Activated B cell treated with CpG ODN at 0.5 μM for 24 hours (primary cell): ENCODE measurements at regions of chr1 and their contacts with region 1.

Region 1: GRCh38 chr1:51878616-51879336 is at the start of gene NRDC:
- DNase-seq: peak; percentile 93
- ATAC-seq: peak; percentile 90
- H3K4me3 Mint-ChIP-seq: no peak within 1 kb of the TSS
- H3K27ac Mint-ChIP-seq: no peak within 1 kb of the TSS
- H3K4me1 Mint-ChIP-seq: peaks cover 29% of the 10 kb centered on the region
- H3K27me3 Mint-ChIP-seq: no peaks in the 10 kb centered on the region
- CTCF ChIP-seq: no peak
- total RNA-seq, gene NRDC: 157 and 162 TPM in 2 replicates

Region 2: GRCh38 chr1:50968158-50968820 is 910.5 kb before region 1 on chr1:
- CTCF ChIA-PET with region 1: no interaction called
- POLR2A ChIA-PET with region 1: interaction called, 3 read pairs
- intact Hi-C with region 1: loop called (anchors 2 kb)
- DNase-seq: peak; percentile 80
- ATAC-seq: peak; percentile 80
- H3K4me3 Mint-ChIP-seq: peak overlapping the region; percentile 98
- H3K27ac Mint-ChIP-seq: peak overlapping the region; percentile 87
- H3K4me1 Mint-ChIP-seq: peaks cover 18% of the 10 kb centered on the region
- H3K27me3 Mint-ChIP-seq: no peaks in the 10 kb centered on the region
- CTCF ChIP-seq: no peak

Region 3: DNA sequence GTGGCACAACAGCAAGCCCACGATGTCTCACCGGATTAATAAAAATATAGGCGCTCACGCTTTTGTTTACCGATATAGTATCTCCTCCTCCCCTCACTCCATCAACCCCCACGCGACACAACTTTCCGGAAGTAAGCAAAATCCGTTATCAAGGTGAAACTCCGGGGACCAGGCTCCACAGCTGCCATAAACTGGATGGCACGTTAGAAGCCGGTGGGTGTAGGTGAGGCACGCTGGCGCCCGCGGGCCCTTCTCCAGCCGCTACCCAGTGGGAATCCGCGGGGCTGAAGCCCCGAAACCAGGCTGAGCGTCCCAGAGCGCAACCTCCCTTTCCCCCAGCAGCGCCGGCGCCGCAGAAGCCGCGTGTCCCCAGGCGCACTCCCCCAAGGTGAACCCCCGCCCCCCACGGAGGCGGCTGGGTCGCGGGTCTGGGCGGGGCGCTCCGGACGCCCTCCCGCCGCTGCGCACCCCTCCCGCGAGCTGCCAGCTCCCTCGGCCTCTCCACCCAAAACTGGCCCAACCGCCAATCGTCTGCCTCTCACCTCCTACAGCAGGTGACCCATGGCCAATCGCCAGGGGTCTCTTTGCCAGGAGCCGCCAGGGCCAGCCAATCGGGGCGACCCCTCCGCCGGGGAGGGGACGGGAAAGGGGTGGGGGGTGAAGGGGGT is 149.5 kb before region 1 on chr1:
- CTCF ChIA-PET with region 1: no interaction called
- POLR2A ChIA-PET with region 1: interaction called, 3 read pairs
- intact Hi-C with region 1: loop called (anchors 2 kb)
- DNase-seq: peak; percentile 89
- ATAC-seq: peak; percentile 96
- H3K4me3 Mint-ChIP-seq: peak overlapping the region; percentile 95
- H3K27ac Mint-ChIP-seq: peak overlapping the region; percentile 87
- H3K4me1 Mint-ChIP-seq: peaks cover 48% of the 10 kb centered on the region
- H3K27me3 Mint-ChIP-seq: no peaks in the 10 kb centered on the region
- CTCF ChIP-seq: no peak

Region 4: GRCh38 chr1:51819810-51820209 is 59.0 kb before region 1 on chr1:
- CTCF ChIA-PET with region 1: no interaction called
- POLR2A ChIA-PET with region 1: no interaction called
- intact Hi-C with region 1: loop called (anchors 5 kb)
- DNase-seq: no peak
- ATAC-seq: no peak
- H3K4me3 Mint-ChIP-seq: no peak overlapping the region
- H3K27ac Mint-ChIP-seq: no peak overlapping the region
- H3K4me1 Mint-ChIP-seq: no peaks in the 10 kb centered on the region
- H3K27me3 Mint-ChIP-seq: no peaks in the 10 kb centered on the region
- CTCF ChIP-seq: no peak

Region 5: GRCh38 chr1:51897699-51898031 is 18.9 kb after region 1 on chr1:
- CTCF ChIA-PET with region 1: interaction called, 10 read pairs
- POLR2A ChIA-PET with region 1: interaction called, 3 read pairs
- intact Hi-C with region 1: no loop called
- DNase-seq: no peak
- ATAC-seq: no peak
- H3K4me3 Mint-ChIP-seq: no peak overlapping the region
- H3K27ac Mint-ChIP-seq: no peak overlapping the region
- H3K4me1 Mint-ChIP-seq: no peaks in the 10 kb centered on the region
- H3K27me3 Mint-ChIP-seq: peaks cover 57% of the 10 kb centered on the region
- CTCF ChIP-seq: no peak

Region 6: DNA sequence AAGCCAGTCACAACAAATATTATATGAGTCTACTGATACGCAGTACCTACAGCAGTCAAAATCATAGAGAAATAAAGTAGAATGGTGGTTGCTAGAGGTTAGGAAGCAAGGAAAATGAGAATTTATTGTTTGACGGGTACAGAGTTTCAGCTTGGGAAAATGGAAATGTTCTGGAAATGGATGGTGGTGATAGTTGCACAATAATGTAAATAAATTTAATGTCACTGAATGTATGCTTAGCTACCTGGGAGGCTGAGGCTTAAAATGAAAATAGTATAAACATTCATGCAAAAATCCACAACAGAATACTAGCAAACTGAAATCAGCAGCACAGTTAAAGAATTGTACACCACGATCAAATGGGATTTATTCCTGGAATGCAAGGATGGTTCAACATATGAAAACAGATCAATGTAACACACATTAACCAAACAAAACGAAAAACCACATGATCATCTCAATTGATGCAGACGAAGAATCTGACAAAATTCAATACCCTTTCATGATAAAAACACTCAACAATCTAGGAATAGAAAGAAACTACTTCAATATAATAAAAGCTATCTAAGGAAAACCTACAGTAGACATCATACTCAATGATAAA is 663.4 kb after region 1 on chr1:
- CTCF ChIA-PET with region 1: no interaction called
- POLR2A ChIA-PET with region 1: no interaction called
- intact Hi-C with region 1: no loop called
- DNase-seq: no peak
- ATAC-seq: no peak
- H3K4me3 Mint-ChIP-seq: no peak overlapping the region
- H3K27ac Mint-ChIP-seq: no peak overlapping the region
- H3K4me1 Mint-ChIP-seq: peaks cover 43% of the 10 kb centered on the region
- H3K27me3 Mint-ChIP-seq: no peaks in the 10 kb centered on the region
- CTCF ChIP-seq: no peak

Region 7: GRCh38 chr1:53837924-53838652 is 1959.3 kb after region 1 on chr1 and contains the start of gene NDC1:
- CTCF ChIA-PET with region 1: no interaction called
- POLR2A ChIA-PET with region 1: no interaction called
- intact Hi-C with region 1: loop called (anchors 5 kb)
- DNase-seq: peak; percentile 86
- ATAC-seq: peak; percentile 89
- H3K4me3 Mint-ChIP-seq: peak within 1 kb of the TSS; percentile 94
- H3K27ac Mint-ChIP-seq: peak within 1 kb of the TSS; percentile 98
- H3K4me1 Mint-ChIP-seq: peaks cover 33% of the 10 kb centered on the region
- H3K27me3 Mint-ChIP-seq: no peaks in the 10 kb centered on the region
- CTCF ChIP-seq: no peak
- total RNA-seq, gene NDC1: 10.6 and 14.0 TPM in 2 replicates